Lower leg skin (tissue), 4 donors: ENCODE measurements at regions of chr2 and their contacts with region 1.

Region 1: GRCh38 chr2:55419233-55419678 is 400 bp downstream of the CCDC88A start:
- DNase-seq: peak; percentile 17 to 86
- H3K4me3 ChIP-seq: peak overlapping the region; percentile 97
- CTCF ChIP-seq: no peak
- POLR2A ChIP-seq: no peak

Region 2: GRCh38 chr2:53739032-53739431 is 1680.2 kb before region 1 on chr2:
- intact Hi-C with region 1: loop called (anchors 5 kb)
- DNase-seq: no peak
- H3K4me3 ChIP-seq: no peak overlapping the region
- CTCF ChIP-seq: no peak
- POLR2A ChIP-seq: no peak